Ascending aorta (tissue), 2 donors: ENCODE measurements at regions of chr17 and their contacts with region 1.

Region 1: GRCh38 chr17:75405365-75406221 is at the start of gene GRB2:
- DNase-seq: peak; percentile 90 to 99
- H3K4me3 ChIP-seq: peak within 1 kb of the TSS; percentile 70 to 96
- H3K27ac ChIP-seq: peak within 1 kb of the TSS; percentile 84 to 94
- H3K4me1 ChIP-seq: peaks cover 12 to 24% of the 10 kb centered on the region in 2 donors
- H3K27me3 ChIP-seq: no peaks in the 10 kb centered on the region
- CTCF ChIP-seq: no peak
- total RNA-seq, gene GRB2: 65.7 TPM

Region 2: DNA sequence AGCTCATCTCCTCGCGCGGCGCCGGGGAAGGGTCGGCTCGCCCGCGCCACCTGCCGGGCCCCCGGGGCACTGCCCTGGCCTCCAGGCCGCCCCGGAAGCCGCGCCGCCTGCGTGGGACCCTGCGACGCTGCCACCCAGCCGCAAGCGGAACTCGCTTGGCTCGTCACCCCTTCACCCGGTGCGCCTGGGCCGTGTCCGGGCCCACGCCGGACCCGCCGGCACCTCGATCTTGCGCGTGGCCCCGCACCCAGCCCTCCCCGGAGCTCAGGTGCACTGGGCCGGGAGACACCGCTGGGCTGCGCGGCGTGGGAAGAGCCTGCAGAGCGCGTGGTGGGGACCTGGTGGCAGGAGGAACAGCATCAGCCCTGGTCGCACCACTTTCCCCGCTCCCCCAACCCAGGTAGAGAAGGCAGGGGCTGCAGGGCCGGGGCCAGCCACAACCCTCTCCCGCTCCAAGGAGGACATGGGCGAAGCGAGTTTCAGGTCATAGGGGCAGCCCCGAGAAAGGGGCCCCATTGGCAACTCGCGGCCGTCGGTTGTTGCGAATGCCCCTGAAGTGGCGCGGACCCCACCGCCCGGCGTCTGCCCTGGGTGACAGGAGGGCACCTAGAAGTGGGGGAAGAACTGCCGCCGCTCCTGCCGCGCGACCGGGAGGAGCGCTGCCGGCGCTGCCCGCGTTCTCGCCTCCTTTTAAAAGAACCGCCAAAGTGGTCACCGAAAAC is 134.2 kb before region 1 on chr17:
- intact Hi-C with region 1: loop called (anchors 5 kb)
- DNase-seq: peak in 1 of 2 donors; percentile 88
- H3K4me3 ChIP-seq: peak overlapping the region; percentile 75 to 95
- H3K27ac ChIP-seq: peak overlapping the region; percentile 89 to 99
- H3K4me1 ChIP-seq: peaks cover 15 to 22% of the 10 kb centered on the region in 2 donors
- H3K27me3 ChIP-seq: no peaks in the 10 kb centered on the region
- CTCF ChIP-seq: peak; percentile 14 to 98 (median 52)

Region 3: GRCh38 chr17:75319904-75320691 is 85.5 kb before region 1 on chr17:
- intact Hi-C with region 1: loop called (anchors 1 kb)
- DNase-seq: no peak
- H3K4me3 ChIP-seq: no peak overlapping the region
- H3K27ac ChIP-seq: no peak overlapping the region
- H3K4me1 ChIP-seq: peaks cover 0 to 2% of the 10 kb centered on the region in 2 donors
- H3K27me3 ChIP-seq: no peaks in the 10 kb centered on the region
- CTCF ChIP-seq: no peak

Region 4: DNA sequence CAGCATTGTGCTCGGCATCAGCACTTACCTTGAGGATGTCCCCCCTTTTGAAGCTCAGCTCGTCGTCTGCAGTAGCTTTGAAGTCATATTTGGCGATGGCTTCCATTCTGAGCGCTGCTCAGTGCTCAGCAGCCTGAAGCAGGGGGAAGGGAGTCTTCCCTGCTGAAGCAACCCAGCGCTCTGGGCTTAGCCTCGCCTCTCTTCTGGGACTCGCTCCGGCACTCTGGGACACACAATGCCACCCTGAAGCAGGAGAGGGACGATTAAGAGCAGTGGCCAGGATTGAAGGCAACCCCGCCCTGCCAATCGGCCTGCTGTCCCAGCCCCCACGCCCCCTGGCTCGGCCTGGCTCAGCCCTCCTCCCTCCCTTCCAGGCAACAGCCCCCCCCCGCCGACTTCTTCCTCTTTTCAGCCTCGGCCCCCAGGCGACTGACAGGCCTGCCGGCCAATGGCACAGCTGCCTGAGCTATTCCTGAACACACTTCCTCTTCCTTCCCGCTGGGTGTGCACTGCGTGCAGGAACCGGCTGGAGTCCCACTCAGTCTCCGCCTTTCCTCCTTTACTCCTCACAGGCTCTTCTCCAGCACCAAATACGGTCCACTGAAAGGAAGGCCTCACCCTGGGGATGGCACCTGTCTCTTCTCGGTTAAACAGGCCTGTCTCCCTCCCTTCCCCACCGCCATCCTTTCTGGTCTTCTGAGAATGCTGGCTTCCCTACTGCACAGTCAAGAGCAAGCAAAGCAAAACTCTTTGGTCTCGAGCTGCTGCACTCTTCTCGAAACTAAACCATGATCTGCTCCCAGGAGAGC is 11.9 kb before region 1 on chr17:
- intact Hi-C with region 1: loop called (anchors 1 kb)
- DNase-seq: peak; percentile 91 to 99
- H3K4me3 ChIP-seq: peak overlapping the region; percentile 68 to 78
- H3K27ac ChIP-seq: peak overlapping the region; percentile 76 to 88
- H3K4me1 ChIP-seq: peaks cover 16 to 42% of the 10 kb centered on the region in 2 donors
- H3K27me3 ChIP-seq: no peaks in the 10 kb centered on the region
- CTCF ChIP-seq: peak in 2 of 3 experiments; percentile 18 to 29

Region 5: DNA sequence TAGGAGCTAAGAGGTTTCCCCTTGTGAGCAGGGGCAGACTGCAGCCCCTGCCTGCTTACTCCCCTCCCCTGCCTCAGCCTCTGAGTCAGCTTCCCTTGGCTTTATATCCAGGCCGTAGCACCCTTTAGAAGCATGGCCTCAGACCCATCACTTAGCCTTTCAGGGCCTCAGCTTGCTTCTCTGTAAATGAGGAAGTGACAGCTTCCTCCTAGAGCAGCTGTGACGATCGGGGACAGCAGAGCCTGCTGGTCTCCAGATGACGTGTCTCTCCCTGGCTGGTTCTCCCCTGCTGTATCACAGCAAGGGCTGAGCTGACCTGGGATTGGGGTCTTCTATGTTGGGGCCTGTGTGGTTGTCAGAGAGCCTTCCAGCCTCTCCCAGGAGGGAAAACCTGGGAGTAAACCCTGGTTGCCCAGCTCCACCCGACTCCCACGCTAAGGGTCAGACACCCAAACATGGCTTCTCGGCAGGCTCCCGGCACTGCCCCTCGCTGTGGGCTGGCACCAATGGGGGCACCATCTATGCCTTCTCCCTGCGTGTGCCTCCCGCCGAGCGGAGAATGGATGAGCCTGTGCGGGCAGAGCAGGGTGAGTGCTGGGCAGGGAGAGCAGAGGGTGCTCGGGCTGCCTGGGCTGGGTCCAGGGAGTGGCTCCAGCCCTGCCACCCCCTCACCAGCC is 165.7 kb after region 1 on chr17:
- intact Hi-C with region 1: no loop called
- DNase-seq: peak in 1 of 2 donors; percentile 38
- H3K4me3 ChIP-seq: no peak overlapping the region
- H3K27ac ChIP-seq: peak overlapping the region in 1 of 2 donors; percentile 45
- H3K4me1 ChIP-seq: no peaks in the 10 kb centered on the region
- H3K27me3 ChIP-seq: no peaks in the 10 kb centered on the region
- CTCF ChIP-seq: no peak

Region 6: DNA sequence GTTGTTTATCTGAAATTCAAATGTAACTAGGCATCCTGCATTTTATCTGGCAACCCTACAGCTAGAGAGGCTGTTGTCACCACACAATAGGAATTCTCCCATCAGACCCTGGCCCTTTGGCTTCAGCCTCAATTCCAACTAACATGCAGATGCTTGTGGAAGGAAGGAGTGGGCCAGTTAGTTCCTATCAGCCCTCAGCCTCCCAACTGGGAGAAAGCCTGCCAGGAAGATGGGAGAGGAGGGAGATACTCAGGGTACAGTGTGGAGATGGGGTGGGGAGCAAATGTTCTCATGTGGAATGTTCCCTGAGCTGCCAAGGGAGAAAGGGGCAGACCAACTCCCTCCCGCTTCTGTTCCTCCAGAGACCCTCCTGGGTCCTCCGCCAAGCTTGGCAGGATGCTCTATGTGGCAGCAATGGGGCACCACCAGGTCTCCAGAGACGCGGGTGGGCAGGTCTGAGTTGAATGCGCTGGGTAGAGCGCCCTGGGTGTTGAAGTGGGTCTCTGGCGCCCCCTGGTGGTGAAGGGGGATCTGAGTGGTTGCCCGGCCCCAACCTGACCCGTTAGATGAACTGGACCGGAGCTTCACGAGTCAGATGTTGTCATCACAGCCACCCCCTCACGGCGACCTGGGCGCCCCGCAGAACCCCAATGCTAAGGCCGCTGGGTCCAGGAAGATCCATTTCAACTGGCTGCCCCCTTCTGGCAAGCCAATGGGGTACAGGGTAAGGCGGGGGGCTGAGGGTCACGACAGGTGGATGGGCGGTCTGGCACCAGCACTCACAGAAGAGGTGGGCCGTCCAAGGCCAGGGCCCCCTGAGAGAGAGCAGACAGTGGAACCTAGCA is 344.2 kb after region 1 on chr17:
- intact Hi-C with region 1: loop called (anchors 10 kb)
- DNase-seq: peak; percentile 59 to 92
- H3K4me3 ChIP-seq: peak overlapping the region in 1 of 2 donors; percentile 2
- H3K27ac ChIP-seq: no peak overlapping the region
- H3K4me1 ChIP-seq: peaks cover 10 to 11% of the 10 kb centered on the region in 2 donors
- H3K27me3 ChIP-seq: no peaks in the 10 kb centered on the region
- CTCF ChIP-seq: peak; percentile 88 to 96 (median 90)